AG04450 (cell line): ENCODE measurements at regions of chr1 and their contacts with region 1.

Region 1: GRCh38 chr1:112390775-112391602 is 5.0 kb upstream of the CTTNBP2NL start:
- DNase-seq: peak; percentile 84
- H3K4me3 ChIP-seq: peak overlapping the region; percentile 45
- H3K27ac ChIP-seq: peak overlapping the region; percentile 66
- H3K27me3 ChIP-seq: peaks cover 3% of the 10 kb centered on the region
- CTCF ChIP-seq: peak; percentile 88

Region 2: DNA sequence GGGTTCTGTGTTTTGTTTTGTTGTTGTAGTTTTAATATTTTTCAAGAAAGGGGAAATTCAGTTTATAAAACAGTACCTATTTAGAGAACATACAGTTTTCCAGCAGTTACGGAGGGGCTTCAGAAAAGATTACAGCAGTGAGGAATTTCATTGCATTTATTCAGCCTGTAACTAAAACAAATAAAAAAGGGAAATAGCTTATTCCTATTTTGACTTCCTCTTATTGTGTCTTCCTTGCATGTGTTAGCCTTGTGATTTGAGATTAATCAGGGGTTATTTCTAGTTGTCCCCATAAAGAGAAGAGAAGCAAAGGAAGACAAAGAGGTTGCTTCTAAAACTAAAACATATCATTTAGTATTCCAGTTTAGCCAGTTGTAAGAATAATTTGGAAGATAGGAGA is 40.0 kb after region 1 on chr1:
- CTCF ChIA-PET with region 1: interaction called, 18 read pairs
- POLR2A ChIA-PET with region 1: no interaction called
- DNase-seq: no peak
- H3K4me3 ChIP-seq: no peak overlapping the region
- H3K27ac ChIP-seq: no peak overlapping the region
- H3K27me3 ChIP-seq: no peaks in the 10 kb centered on the region
- CTCF ChIP-seq: no peak

Region 3: GRCh38 chr1:112466078-112466660 is 75.2 kb after region 1 on chr1:
- CTCF ChIA-PET with region 1: interaction called, 125 read pairs
- POLR2A ChIA-PET with region 1: interaction called, 6 read pairs
- DNase-seq: peak; percentile 89
- H3K4me3 ChIP-seq: peak overlapping the region; percentile 55
- H3K27ac ChIP-seq: peak overlapping the region; percentile 69
- H3K27me3 ChIP-seq: no peaks in the 10 kb centered on the region
- CTCF ChIP-seq: peak; percentile 80

Region 4: GRCh38 chr1:112522621-112523020 is 131.6 kb after region 1 on chr1:
- CTCF ChIA-PET with region 1: interaction called, 10 read pairs
- POLR2A ChIA-PET with region 1: interaction called, 7 read pairs
- DNase-seq: peak; percentile 86
- H3K4me3 ChIP-seq: no peak overlapping the region
- H3K27ac ChIP-seq: peak overlapping the region; percentile 61
- H3K27me3 ChIP-seq: peaks cover 30% of the 10 kb centered on the region
- CTCF ChIP-seq: no peak

Region 5: GRCh38 chr1:112674439-112674985 is 283.5 kb after region 1 on chr1 and contains the start of gene MOV10:
- CTCF ChIA-PET with region 1: interaction called, 26 read pairs
- POLR2A ChIA-PET with region 1: interaction called, 3 read pairs
- DNase-seq: peak; percentile 36
- H3K4me3 ChIP-seq: peak within 1 kb of the TSS; percentile 80
- H3K27ac ChIP-seq: peak within 1 kb of the TSS; percentile 86
- H3K27me3 ChIP-seq: no peaks in the 10 kb centered on the region
- CTCF ChIP-seq: no peak
- polyA plus RNA-seq, gene MOV10: 58.1 and 59.2 TPM in 2 replicates

Region 6: GRCh38 chr1:112964347-112964746 is 573.4 kb after region 1 on chr1:
- CTCF ChIA-PET with region 1: no interaction called
- POLR2A ChIA-PET with region 1: no interaction called
- DNase-seq: no peak
- H3K4me3 ChIP-seq: no peak overlapping the region
- H3K27ac ChIP-seq: no peak overlapping the region
- H3K27me3 ChIP-seq: no peaks in the 10 kb centered on the region
- CTCF ChIP-seq: no peak